A549 (cell line): ENCODE measurements at regions of chr19 and their contacts with region 1.

Region 1: DNA sequence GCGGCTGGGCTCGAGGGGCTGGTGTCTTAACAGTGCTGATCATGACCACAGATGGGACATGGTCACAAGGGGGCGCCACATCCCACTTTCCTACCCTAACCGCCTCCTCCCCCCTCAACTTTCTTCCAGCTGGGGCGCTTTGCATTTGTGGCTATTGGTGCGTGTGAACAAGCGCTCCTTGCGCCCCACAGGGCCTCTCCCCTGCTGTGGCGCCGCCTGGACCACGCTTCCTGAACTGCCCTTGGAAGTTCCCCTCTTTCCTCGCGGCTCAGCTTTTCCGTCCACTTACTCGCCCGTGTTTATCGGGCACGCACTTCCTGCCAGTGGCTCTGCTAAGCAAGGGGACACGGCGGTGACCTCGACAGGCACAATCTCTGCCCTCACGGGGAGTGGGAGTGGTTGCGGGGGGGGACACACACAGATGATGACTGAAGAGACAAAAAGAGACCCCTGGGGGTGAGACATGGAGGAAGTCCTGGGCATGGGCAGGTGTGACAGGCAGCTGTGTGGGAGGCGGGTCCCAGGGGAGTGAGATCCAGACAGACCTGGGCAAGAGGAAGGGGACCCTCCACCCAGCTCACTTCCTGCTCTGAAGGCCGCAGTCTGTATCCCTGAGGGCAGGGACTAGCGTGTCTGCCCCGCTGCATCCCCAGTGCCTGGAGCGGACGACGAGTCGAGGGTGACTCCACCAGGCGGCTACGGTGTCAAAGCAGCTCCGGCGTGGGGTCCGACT is 40.3 kb downstream of the ZNF787 start:
- DNase-seq: peak; percentile 48 to 65
- ATAC-seq: peak; percentile 10 to 64; a peak in 4 of 6 replicates
- H3K4me3 ChIP-seq: no peak overlapping the region
- H3K27ac ChIP-seq: no peak overlapping the region
- H3K4me1 ChIP-seq: no peaks in the 10 kb centered on the region
- CTCF ChIP-seq: peak; percentile 17; the same call in 2 of the 3 replicates
- EP300 ChIP-seq: no peak
- POLR2A ChIP-seq: no peak
- RAD21 ChIP-seq: peak in 1 of 2 experiments; percentile 46; a peak in 2 of 5 replicates

Region 2: GRCh38 chr19:56066152-56067023 is 14.4 kb before region 1 on chr19:
- CTCF ChIA-PET with region 1: interaction called, 48 read pairs
- POLR2A ChIA-PET with region 1: no interaction called
- DNase-seq: peak; percentile 58 to 78
- ATAC-seq: peak; percentile 83 to 94
- H3K4me3 ChIP-seq: no peak overlapping the region; the same call in 2 of the 3 replicates
- H3K27ac ChIP-seq: no peak overlapping the region
- H3K4me1 ChIP-seq: no peaks in the 10 kb centered on the region
- CTCF ChIP-seq: peak; percentile 80
- EP300 ChIP-seq: no peak
- POLR2A ChIP-seq: no peak
- RAD21 ChIP-seq: peak; percentile 81 to 85

Region 3: GRCh38 chr19:56090931-56091490 is 10.2 kb after region 1 on chr19:
- CTCF ChIA-PET with region 1: interaction called, 14 read pairs
- POLR2A ChIA-PET with region 1: no interaction called
- DNase-seq: peak in 1 of 2 experiments; percentile 33
- ATAC-seq: peak; percentile 42 to 51; a peak in 5 of 6 replicates
- H3K4me3 ChIP-seq: peak overlapping the region; percentile 54
- H3K27ac ChIP-seq: peak overlapping the region; percentile 56 to 67; a peak in 5 of 6 replicates
- H3K4me1 ChIP-seq: peaks cover 18% of the 10 kb centered on the region
- CTCF ChIP-seq: no peak
- EP300 ChIP-seq: no peak
- POLR2A ChIP-seq: no peak
- RAD21 ChIP-seq: no peak

Region 4: DNA sequence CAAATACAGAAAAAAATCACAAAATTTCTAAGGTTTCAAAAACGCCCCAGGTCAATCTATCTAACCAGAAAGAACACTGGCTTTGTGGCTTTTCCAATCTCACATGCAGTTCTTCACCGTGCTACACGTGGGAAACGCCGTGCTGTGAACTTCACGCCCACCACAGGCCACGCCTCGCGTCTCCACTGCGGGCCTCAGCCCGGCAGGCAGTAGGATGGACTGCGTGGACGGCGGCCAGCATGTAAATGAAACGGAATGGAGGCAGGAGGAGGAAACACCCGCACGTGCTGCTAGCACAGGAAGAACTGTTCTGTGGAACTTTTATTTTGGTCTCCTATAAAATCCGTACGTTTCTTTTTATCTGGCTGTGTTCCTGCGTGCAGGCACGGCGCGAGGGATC is 16.5 kb after region 1 on chr19:
- CTCF ChIA-PET with region 1: interaction called, 14 read pairs
- POLR2A ChIA-PET with region 1: no interaction called
- DNase-seq: no peak
- ATAC-seq: no peak
- H3K4me3 ChIP-seq: no peak overlapping the region
- H3K27ac ChIP-seq: no peak overlapping the region
- H3K4me1 ChIP-seq: peaks cover 5% of the 10 kb centered on the region; the same call in 1 of the 3 replicates
- CTCF ChIP-seq: no peak
- EP300 ChIP-seq: no peak
- POLR2A ChIP-seq: no peak
- RAD21 ChIP-seq: no peak

Region 5: DNA sequence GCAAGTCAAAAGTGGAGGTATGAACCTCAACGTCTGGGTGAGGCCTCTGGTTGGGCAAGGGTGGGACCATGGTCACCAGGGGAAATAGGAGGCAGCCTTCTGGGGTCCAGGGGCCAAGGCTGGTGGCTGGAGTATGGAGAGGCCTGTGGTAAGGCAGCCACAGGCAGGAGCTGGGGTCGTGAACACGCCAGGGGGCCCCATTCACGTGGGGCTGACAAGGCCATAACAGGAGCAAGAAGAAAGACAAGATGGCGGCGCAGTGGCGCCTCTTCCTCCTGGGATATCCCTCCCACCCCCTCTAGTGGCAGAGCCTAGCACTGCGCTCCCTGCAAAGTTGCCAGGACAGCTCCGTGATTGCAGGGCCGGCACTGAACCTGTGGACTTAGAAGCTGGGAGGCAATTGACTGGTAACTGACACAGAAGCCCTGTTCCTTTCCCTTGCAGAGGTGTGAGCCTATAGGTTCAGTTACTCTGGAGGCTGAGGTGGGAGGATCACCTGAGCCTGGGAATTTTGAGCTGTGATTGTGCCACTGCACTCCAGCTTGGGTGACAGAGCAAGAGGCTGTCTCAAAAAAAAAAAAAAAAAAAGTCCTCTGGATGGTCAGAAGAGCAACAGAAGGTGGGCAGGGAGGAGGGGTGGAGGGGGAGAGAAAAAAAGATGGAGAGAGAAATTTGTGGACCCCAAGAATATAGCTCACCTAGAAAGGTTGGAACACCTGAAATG is 172.0 kb after region 1 on chr19:
- CTCF ChIA-PET with region 1: interaction called, 11 read pairs
- POLR2A ChIA-PET with region 1: no interaction called
- DNase-seq: peak; percentile 68 to 87
- ATAC-seq: peak; percentile 83 to 96; a peak in 5 of 6 replicates
- H3K4me3 ChIP-seq: no peak overlapping the region
- H3K27ac ChIP-seq: no peak overlapping the region
- H3K4me1 ChIP-seq: no peaks in the 10 kb centered on the region
- CTCF ChIP-seq: peak; percentile 35; the same call in 2 of the 3 replicates
- EP300 ChIP-seq: no peak
- POLR2A ChIP-seq: no peak
- RAD21 ChIP-seq: peak; percentile 20 to 67; a peak in 3 of 5 replicates